Mammary epithelial cell (primary cell): ENCODE measurements at regions of chr15 and their contacts with region 1.

Region 1: DNA sequence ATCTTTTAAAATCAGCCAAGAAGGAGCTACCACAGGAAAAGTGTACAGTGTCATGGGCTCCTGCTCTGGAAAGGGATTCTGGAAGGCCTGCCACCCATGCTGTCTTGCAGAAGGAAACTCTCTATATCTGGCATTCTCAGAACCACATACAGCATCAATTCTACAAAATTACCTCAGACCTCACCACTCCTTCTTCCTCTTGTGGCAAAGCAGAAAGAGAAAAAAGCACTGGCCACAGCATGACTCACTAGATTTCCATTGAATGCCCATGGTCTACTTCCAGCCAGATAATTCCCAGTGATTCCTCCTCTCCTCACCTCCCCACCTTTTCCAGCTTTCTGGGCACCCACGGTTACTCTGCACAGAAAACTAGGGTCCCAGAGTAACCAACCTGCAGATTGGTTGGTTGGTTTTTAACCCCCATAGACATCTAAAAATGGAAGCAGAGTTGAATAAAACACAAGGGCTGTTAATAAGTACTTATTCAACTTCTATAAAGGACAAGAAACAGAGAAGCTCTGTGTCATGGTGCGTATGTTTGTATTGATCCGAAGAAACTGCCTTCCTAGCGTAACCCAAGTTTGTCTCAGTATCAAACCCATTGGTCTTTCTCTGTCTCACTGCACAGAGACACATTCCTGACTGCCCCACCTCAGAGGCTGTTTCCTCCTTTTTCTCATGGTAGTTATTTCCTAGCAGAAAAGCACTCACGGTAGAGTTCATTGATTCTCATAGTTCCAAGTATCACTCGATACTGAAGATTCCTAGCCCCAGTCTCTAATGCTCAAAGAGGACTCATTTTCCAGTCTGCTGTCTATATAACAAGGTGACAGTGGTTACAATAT is 67.7 kb downstream of the LDHAL6B start:
- DNase-seq: peak; percentile 79
- H3K4me3 ChIP-seq: no peak overlapping the region
- H3K27ac ChIP-seq: peak overlapping the region; percentile 61
- H3K4me1 ChIP-seq: peaks cover 62% of the 10 kb centered on the region
- H3K27me3 ChIP-seq: no peaks in the 10 kb centered on the region
- CTCF ChIP-seq: no peak

Region 2: DNA sequence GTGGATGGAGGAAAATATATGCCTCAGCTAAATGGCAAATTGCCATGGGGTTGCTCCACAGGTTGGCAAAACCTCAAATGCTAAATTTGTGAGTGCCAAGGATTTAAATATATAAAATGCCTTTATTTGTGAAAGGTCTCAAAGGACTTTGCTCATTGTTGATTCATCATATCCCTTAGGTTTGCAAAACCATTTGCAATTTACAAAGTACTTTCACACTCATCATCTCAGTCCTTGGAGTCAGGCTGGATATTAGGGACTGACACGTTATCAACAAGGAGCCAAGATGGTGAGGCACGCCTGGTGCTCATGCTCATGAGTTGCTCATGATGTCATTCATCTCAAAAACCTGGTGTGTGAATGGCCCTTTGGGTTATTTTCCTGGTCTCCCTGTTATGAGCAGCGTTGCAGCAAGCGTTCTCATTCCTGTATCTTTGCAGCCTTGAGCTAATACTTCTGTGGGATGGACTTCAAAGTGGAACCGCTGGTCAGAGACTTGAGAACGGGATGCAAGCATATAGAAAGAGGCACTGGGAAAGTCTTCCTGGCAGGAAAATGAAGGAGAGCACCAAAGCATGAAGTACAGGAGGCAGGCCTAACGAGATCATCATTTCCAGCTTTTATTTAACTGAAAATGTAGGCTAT is 32.3 kb after region 1 on chr15:
- CTCF ChIA-PET with region 1: no interaction called
- dilution Hi-C with region 1: no loop called
- in situ Hi-C with region 1: no loop called
- intact Hi-C with region 1: loop called (anchors 5 kb)
- DNase-seq: peak; percentile 48
- H3K4me3 ChIP-seq: no peak overlapping the region
- H3K27ac ChIP-seq: peak overlapping the region; percentile 5
- H3K4me1 ChIP-seq: peaks cover 35% of the 10 kb centered on the region
- H3K27me3 ChIP-seq: no peaks in the 10 kb centered on the region
- CTCF ChIP-seq: no peak